T-cell (primary cell): ENCODE measurements at regions of chr20 and their contacts with region 1.

Region 1: DNA sequence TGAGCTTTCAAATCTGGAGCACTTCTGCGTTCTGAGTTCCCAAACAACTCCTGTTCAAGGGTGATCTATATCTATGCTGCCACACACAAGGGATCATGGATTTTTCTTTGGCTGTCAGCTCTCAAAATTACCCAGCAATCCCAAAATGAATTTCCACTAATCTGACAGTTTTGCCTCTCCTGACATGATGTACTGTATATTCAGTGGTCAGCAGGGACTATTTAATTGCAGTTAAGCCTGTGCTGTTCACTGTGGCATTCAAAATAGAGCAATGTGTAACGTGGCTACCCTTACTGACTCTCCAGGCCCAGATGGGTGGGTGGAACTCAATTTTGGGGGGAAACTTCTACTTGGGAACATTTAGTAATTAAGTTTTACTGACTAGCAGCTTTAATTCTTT is 283.8 kb upstream of the TSHZ2 start:
- DNase-seq: no peak
- ATAC-seq: no peak
- H3K4me3 ChIP-seq: no peak overlapping the region
- H3K4me3 Mint-ChIP-seq: no peak overlapping the region
- H3K27ac ChIP-seq: no peak overlapping the region
- H3K27ac Mint-ChIP-seq: no peak overlapping the region
- H3K4me1 ChIP-seq: no peaks in the 10 kb centered on the region
- H3K4me1 Mint-ChIP-seq: peaks cover 0 to 4% (median 0%) of the 10 kb centered on the region in 3 donors
- H3K27me3 ChIP-seq: peaks cover 0 to 11% of the 10 kb centered on the region in 2 experiments
- H3K27me3 Mint-ChIP-seq: peaks cover 0 to 26% of the 10 kb centered on the region in 2 donors

Region 2: DNA sequence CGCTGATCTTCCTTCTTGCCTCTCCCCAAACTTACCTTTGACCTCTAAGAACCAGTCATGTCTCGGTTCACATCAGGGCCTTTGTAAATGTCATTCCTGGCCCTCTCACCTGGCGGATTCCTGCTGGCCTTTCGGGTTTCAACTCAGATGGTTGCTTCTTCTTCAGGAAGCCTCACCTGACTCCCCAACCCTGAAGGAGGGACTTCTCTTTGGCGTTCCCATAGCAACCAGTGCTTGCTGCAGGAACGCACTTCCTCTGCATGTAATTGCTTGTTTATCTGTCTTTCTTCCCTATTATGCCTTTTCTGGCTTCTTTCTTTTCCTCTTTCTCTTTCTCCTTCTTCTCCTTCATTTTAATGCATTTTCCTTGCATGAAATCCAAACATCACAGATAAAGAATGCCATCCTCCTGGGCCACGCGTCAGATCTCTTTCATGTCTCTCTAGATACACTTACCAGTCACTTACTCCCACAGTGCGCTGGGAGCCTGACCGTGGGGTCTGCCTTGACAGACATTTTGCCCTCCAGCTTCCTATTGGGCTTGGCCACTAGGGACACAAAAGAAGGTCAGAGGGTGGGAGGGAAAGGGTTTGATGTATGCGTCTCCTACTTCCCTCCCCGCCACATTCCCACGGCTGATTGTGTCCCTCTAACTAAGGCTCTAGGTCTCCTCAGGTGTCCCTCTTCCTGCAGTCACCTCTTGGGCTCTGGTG is 11.9 kb before region 1 on chr20:
- CTCF ChIA-PET with region 1: no interaction called
- POLR2A ChIA-PET with region 1: no interaction called
- DNase-seq: peak in 3 of 35 experiments; percentile 4 to 8 (median 5)
- ATAC-seq: no peak
- H3K4me3 ChIP-seq: no peak overlapping the region
- H3K4me3 Mint-ChIP-seq: no peak overlapping the region
- H3K27ac ChIP-seq: no peak overlapping the region
- H3K27ac Mint-ChIP-seq: no peak overlapping the region
- H3K4me1 ChIP-seq: no peaks in the 10 kb centered on the region
- H3K4me1 Mint-ChIP-seq: peaks cover 9 to 16% (median 15%) of the 10 kb centered on the region in 3 donors
- H3K27me3 ChIP-seq: no peaks in the 10 kb centered on the region
- H3K27me3 Mint-ChIP-seq: peaks cover 0 to 18% of the 10 kb centered on the region in 2 donors

Region 3: DNA sequence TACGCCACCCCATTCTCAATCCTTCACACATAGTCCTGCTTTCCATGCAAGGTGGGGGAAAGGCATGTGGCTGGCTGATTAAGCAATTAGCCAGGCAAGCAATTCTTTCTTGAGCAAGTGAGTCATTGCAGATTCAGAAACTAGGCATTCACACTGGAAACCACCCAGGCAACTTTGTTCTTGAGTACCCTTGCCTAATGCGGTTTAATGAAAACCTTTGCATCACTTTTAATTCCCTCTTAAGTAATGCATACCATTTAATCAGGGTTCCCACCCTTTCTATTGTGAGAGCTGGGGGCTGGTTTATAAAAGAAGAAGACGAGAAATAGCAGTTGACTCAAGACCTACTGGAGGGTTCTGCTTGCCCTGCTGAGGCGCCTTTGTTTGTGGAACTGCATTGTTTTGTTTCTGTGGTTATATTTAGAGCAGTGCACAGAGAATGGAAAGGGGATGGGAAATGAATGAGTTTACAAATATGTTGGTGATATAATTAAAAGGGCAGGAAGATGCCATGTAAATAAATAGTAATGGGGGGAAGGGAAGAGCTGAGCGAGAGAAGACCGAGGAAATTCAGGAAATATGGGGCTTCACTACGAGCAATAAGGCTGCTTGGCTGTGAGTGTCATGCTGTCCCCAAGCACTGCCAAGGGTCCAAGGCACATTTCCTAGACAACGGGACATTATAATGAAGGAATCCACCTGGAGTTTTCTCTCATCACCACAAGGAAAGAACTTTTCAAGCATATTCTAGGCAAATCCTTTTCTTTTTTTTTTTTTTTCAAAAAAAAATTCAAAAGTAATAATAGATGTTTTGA is 235.0 kb after region 1 on chr20:
- CTCF ChIA-PET with region 1: no interaction called
- POLR2A ChIA-PET with region 1: interaction called in 1 of 2 experiments, 12 read pairs
- DNase-seq: no peak
- ATAC-seq: no peak
- H3K4me3 ChIP-seq: no peak overlapping the region
- H3K4me3 Mint-ChIP-seq: no peak overlapping the region
- H3K27ac ChIP-seq: no peak overlapping the region
- H3K27ac Mint-ChIP-seq: no peak overlapping the region
- H3K4me1 ChIP-seq: no peaks in the 10 kb centered on the region
- H3K4me1 Mint-ChIP-seq: peaks cover 0 to 7% (median 0%) of the 10 kb centered on the region in 3 donors
- H3K27me3 ChIP-seq: no peaks in the 10 kb centered on the region
- H3K27me3 Mint-ChIP-seq: peaks cover 5 to 13% of the 10 kb centered on the region in 2 donors